K562 (cell line): ENCODE measurements at regions of chr1 and their contacts with region 1.

Region 1: DNA sequence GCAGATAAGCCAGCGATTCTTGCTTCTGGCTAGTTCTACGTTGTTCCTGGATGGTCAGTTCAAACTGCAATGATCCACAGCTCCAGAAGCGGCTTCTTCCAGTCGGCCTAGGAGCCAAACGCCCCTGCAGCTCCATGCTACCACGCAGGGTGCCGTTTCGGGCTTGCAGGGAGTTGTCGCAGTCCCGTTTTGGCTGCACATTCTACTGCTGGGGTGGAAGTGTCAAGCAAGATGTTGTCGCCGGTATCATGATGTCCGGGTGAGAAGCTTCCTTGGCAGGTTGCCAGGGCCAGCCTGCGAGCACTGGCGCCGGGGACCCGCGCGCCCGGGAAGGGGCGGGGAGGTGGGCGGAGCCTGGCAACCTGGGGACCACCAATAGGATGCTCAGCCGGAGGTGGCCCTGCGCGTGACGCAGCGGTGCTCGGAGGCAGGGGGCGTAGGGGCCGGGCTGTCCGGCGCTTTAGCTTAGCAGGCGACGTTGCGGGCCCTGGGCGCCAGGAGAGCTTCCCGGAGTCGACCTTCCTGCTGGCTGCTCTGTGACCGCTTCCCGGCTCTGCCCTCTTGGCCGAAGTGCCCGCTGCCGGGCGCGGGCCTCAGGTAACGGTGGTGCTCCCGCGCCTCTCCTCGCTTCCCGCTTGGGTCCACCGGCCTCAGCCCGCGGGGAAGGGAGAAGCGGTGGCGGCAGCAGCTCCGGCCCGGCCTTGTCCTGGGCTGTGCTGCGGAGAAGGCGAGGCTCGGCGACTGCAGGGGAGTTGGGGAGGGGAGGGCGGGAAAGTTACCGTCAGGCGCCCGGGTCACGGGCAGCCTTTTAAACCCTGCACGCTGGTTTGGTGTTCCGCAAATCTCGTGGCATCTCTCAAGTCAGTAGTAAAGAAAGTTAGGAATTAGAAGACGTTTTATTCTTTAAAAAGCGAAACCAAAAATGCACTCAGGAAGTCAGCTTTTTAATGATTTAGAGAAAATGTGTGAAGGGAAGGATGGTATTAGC is at the start of gene SOAT1:
- DNase-seq: peak; percentile 98 to 99 (median 98)
- ATAC-seq: peak; percentile 98
- H3K4me3 ChIP-seq: peak within 1 kb of the TSS; percentile 72
- H3K27ac ChIP-seq: peak within 1 kb of the TSS; percentile 84
- H3K4me1 ChIP-seq: peaks cover 12 to 20% of the 10 kb centered on the region in 2 experiments; a peak in 4 of 5 replicates
- H3K27me3 ChIP-seq: no peaks in the 10 kb centered on the region
- CTCF ChIP-seq: peak in 2 of 3 experiments; percentile 16 to 38; a peak in 2 of 6 replicates
- EP300 ChIP-seq: no peak
- POLR2A ChIP-seq: peak; percentile 91
- RAD21 ChIP-seq: peak in 1 of 2 experiments; percentile 27; a peak in 2 of 4 replicates
- polyA plus RNA-seq, gene SOAT1: 9.2 to 11.9 TPM

Region 2: DNA sequence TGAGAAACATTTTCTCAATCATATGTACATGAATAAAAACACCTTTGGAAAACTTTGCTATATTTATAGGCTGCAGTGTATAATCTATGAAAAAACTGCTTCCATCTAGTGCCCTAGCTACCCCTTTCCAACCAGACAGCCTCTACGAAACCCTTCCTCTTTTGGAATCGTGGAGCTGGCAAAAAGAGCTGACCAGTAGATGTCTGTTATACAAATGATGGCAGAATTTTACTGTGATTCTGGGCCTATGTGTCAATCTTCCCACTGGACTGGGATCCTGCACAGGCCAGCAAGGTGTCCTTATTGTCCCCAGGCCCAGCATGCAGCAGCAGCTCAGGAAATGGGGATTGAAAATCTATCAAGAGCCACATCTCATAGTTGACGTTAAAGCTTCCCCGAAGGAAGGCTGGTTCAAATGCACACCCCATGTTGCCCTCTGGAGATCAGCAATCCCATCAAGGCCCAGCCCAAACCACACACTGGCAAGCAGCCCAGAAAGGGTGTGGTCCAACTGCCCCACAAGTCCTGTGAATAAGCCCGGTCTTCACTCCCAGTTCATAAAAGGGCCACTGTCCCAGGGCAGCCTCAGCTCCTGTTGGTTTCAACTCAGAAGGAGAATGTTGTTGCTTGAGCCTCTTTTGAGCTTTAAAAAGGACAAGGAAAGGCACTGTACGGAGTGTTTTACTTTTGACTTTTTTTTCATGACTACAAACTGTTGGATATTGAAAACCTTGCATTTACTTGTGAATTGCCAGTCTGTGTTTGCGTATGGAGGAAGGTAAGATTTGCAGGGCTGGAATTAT is 276.7 kb before region 1 on chr1:
- CTCF ChIA-PET with region 1: no interaction called
- POLR2A ChIA-PET with region 1: no interaction called
- in situ Hi-C with region 1: no loop called
- intact Hi-C with region 1: loop called (anchors 2 kb)
- DNase-seq: peak; percentile 87 to 99 (median 91)
- ATAC-seq: peak; percentile 91
- H3K4me3 ChIP-seq: peak overlapping the region; percentile 21
- H3K27ac ChIP-seq: peak overlapping the region; percentile 67
- H3K4me1 ChIP-seq: peaks cover 39 to 43% of the 10 kb centered on the region in 2 experiments
- H3K27me3 ChIP-seq: no peaks in the 10 kb centered on the region
- CTCF ChIP-seq: no peak; a peak in 1 of 6 replicates
- EP300 ChIP-seq: peak; percentile 91
- POLR2A ChIP-seq: peak; percentile 71
- RAD21 ChIP-seq: peak in 1 of 2 experiments; percentile 10; a peak in 1 of 4 replicates

Region 3: DNA sequence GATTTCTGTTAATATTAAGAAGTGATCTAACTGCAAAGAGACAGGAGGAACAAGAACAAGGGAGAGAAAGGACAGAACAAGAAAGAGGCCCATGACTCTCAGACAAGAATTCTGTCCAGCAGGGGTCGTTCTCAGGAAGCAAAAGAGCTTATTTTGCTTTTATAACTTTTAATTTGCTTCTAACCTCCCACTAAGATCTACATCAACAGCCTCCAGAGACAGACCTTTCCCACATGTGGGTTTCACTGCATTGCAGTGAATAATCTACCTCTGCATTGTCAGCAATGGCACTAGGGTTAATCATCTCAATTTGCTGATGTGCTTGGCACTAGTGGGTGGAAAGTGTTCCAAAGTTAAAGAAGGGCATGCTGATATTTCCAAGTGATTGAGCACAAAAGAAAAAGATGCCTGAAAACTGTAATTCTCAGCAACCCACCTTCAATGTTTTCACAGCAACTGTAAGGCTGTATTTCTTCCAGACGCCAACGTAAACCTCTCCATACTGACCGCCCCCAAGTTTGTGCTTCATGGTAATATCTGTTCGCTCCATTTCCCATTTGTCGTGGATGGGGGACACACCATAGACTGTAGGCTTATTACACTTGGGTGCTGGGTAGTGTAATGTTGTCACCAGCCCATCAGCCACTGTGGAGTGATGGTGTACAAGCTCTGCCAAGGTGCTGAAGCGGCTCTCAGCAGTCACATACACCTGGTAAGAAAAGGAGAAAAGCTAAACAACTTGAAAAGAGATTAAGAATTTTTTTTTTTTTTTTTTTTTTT is 172.3 kb before region 1 on chr1:
- CTCF ChIA-PET with region 1: no interaction called
- POLR2A ChIA-PET with region 1: interaction called, 3 read pairs
- in situ Hi-C with region 1: no loop called
- intact Hi-C with region 1: loop called (anchors 1 kb)
- DNase-seq: peak in 2 of 4 experiments; percentile 38 to 58
- ATAC-seq: peak; percentile 83
- H3K4me3 ChIP-seq: no peak overlapping the region
- H3K27ac ChIP-seq: no peak overlapping the region
- H3K4me1 ChIP-seq: no peaks in the 10 kb centered on the region
- H3K27me3 ChIP-seq: no peaks in the 10 kb centered on the region
- CTCF ChIP-seq: peak; percentile 48 to 77 (median 73); a peak in 5 of 6 replicates
- EP300 ChIP-seq: no peak
- POLR2A ChIP-seq: no peak
- RAD21 ChIP-seq: peak; percentile 81 to 89

Region 4: DNA sequence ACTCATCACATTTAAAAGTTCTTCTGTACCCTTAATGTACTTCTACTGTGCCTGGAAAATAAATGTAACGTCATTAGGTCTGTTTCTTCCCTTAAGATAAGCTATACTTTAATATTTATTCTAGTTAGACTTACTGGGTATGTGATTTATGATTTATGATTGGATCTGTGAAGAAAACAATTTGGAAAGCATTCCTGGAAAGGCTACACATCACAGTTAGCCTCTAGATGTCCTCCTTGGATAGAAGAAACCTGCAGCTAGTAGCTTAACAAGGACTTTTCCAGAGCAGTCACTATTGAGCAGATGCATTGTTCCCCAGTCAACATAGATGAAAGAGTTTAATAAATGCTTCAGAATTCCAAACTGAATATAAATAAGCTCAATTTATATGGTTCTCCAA is 42.0 kb before region 1 on chr1:
- CTCF ChIA-PET with region 1: no interaction called
- POLR2A ChIA-PET with region 1: no interaction called
- in situ Hi-C with region 1: no loop called
- intact Hi-C with region 1: loop called (anchors 2 kb)
- DNase-seq: peak in 2 of 4 experiments; percentile 28 to 44
- ATAC-seq: peak; percentile 84
- H3K4me3 ChIP-seq: no peak overlapping the region
- H3K27ac ChIP-seq: no peak overlapping the region
- H3K4me1 ChIP-seq: no peaks in the 10 kb centered on the region; a peak in 1 of 5 replicates
- H3K27me3 ChIP-seq: no peaks in the 10 kb centered on the region; a peak in 1 of 5 replicates
- CTCF ChIP-seq: peak; percentile 55 to 85 (median 56); a peak in 4 of 6 replicates
- EP300 ChIP-seq: no peak
- POLR2A ChIP-seq: no peak
- RAD21 ChIP-seq: peak; percentile 80 to 94

Region 5: DNA sequence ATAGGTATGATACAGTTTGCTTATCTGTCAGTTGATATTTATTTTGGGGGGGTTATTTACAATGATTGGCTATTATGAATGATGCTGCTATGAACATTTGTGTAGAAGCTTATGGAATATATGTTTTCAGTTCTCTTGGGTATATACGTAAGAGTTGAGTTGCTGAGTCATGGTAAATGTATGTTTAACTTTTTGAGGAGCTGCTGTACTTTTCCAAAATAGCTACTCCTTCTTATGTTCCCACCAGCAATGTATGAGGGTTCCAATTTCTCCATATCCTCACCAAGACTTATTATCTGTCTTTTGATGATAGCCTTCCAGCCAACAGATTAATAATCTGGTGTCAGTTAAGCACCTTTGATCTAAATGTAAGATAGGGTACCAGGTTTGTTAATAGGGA is 11.8 kb after region 1 on chr1:
- CTCF ChIA-PET with region 1: no interaction called
- POLR2A ChIA-PET with region 1: interaction called, 18 read pairs
- in situ Hi-C with region 1: no loop called
- intact Hi-C with region 1: no loop called
- DNase-seq: no peak
- ATAC-seq: peak; percentile 56; the same call in 2 of the 3 replicates
- H3K4me3 ChIP-seq: no peak overlapping the region
- H3K27ac ChIP-seq: peak overlapping the region; percentile 21; the same call in 1 of the 3 replicates
- H3K4me1 ChIP-seq: peaks cover 2 to 15% of the 10 kb centered on the region in 2 experiments; a peak in 4 of 5 replicates
- H3K27me3 ChIP-seq: no peaks in the 10 kb centered on the region
- CTCF ChIP-seq: no peak
- EP300 ChIP-seq: no peak
- POLR2A ChIP-seq: no peak
- RAD21 ChIP-seq: no peak

Region 6: GRCh38 chr1:179318491-179318890 is 24.9 kb after region 1 on chr1:
- CTCF ChIA-PET with region 1: no interaction called
- POLR2A ChIA-PET with region 1: no interaction called
- in situ Hi-C with region 1: no loop called
- intact Hi-C with region 1: no loop called
- DNase-seq: no peak
- ATAC-seq: 0 out of 3 replicates have a peak, but pooled peaks have one; percentile 36
- H3K4me3 ChIP-seq: no peak overlapping the region
- H3K27ac ChIP-seq: no peak overlapping the region
- H3K4me1 ChIP-seq: no peaks in the 10 kb centered on the region
- H3K27me3 ChIP-seq: no peaks in the 10 kb centered on the region
- CTCF ChIP-seq: no peak
- EP300 ChIP-seq: no peak
- POLR2A ChIP-seq: no peak
- RAD21 ChIP-seq: no peak